Caco-2 (cell line): ENCODE measurements at regions of chr1 and their contacts with region 1.

Region 1: GRCh38 chr1:24111996-24112779 is at the start of gene MYOM3:
- DNase-seq: peak; percentile 69 to 74
- H3K4me3 ChIP-seq: no peak within 1 kb of the TSS
- H3K4me3 Mint-ChIP-seq: no peak within 1 kb of the TSS
- H3K27ac Mint-ChIP-seq: no peak within 1 kb of the TSS
- H3K4me1 ChIP-seq: 0 out of 2 replicates have a peak, but pooled peaks cover 5% of the 10 kb centered on the region
- H3K4me1 Mint-ChIP-seq: no peaks in the 10 kb centered on the region
- H3K27me3 ChIP-seq: no peaks in the 10 kb centered on the region
- H3K27me3 Mint-ChIP-seq: no peaks in the 10 kb centered on the region
- CTCF ChIP-seq: peak in 1 of 2 experiments; percentile 78
- total RNA-seq, gene MYOM3: not detected in 2 replicates

Region 2: DNA sequence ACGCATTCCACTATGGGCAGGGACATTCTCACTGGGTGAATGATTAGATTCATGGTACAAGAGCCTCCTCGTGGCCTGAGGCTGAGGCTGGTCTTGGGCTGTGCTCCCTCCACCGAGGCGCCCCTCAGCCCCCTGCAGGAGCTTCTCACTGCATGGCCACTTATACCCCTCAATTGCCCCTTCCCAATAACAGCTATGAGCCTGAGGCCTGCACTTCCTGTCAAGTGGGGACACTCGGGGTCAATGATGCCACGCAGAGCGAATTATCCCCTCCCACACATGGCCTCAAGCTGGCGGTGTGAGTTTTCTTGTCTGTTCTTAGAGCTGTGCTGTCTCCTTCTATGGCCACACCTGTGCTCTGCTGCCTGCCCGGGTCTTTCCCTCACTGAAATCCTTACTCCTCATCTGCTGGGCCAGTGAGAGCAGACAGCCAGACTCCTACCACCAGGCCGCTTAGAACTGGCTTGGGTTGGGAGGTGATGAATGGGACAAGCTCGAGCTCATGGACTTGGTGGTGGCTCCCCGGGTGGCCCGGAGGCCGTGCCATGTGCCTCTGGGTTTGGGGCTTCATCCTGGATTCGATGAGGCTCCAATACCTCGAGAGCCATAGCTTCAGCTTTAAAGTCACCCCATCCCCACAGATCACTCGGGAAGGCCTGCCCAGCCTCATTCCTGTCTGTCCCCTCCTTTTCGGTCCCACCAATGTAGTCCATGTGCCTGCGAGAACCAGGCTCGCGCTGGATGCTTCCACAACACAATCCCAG is 51.9 kb before region 1 on chr1:
- CTCF ChIA-PET with region 1: no interaction called
- POLR2A ChIA-PET with region 1: no interaction called
- intact Hi-C with region 1: no loop called
- DNase-seq: no peak
- H3K4me3 ChIP-seq: no peak overlapping the region
- H3K4me3 Mint-ChIP-seq: no peak overlapping the region
- H3K27ac Mint-ChIP-seq: no peak overlapping the region
- H3K4me1 ChIP-seq: no peaks in the 10 kb centered on the region
- H3K4me1 Mint-ChIP-seq: no peaks in the 10 kb centered on the region
- H3K27me3 ChIP-seq: no peaks in the 10 kb centered on the region
- H3K27me3 Mint-ChIP-seq: no peaks in the 10 kb centered on the region
- CTCF ChIP-seq: no peak

Region 3: GRCh38 chr1:24070821-24071393 is 41.3 kb before region 1 on chr1:
- CTCF ChIA-PET with region 1: interaction called, 10 read pairs
- POLR2A ChIA-PET with region 1: no interaction called
- intact Hi-C with region 1: loop called (anchors 1 kb)
- DNase-seq: peak; percentile 79 to 85
- H3K4me3 ChIP-seq: no peak overlapping the region
- H3K4me3 Mint-ChIP-seq: no peak overlapping the region
- H3K27ac Mint-ChIP-seq: no peak overlapping the region
- H3K4me1 ChIP-seq: no peaks in the 10 kb centered on the region
- H3K4me1 Mint-ChIP-seq: no peaks in the 10 kb centered on the region
- H3K27me3 ChIP-seq: no peaks in the 10 kb centered on the region
- H3K27me3 Mint-ChIP-seq: no peaks in the 10 kb centered on the region
- CTCF ChIP-seq: peak; percentile 77 to 81

Region 4: DNA sequence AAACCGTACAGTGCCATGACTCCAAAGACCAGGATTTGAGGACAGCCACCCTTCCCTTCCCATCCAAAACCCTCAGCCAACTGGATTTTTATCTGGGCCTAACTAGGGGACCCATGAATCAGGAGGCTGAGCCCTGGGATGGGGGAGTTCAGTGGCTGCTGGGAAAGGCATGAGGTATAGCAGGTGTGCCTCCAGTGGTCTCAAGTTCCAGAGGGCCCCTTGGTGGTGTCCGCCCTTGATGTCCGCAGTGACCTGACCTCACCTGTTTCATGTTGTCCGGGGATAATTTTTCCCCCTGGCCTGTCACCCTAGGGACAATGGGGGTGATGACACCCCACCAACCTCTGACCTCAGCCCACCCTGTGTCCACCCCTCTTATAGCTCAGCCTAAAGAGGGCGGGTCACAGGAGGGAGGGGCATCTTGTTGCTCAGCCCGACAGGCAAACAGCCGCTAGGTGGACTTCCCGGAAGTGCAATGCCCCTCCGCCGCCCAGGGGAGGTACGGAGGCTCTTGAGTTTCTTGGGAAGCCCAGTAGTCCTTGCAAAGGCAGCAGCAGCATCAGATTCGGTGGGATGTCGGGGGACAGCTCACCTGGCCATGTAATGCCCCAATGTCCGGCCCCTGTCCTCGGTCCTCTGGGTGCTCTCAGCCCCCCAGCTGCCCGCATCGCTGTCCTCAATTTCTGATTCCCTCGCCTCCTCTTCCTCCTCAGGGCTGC is 44.5 kb after region 1 on chr1:
- CTCF ChIA-PET with region 1: no interaction called
- POLR2A ChIA-PET with region 1: no interaction called
- intact Hi-C with region 1: no loop called
- DNase-seq: no peak
- H3K4me3 ChIP-seq: no peak overlapping the region
- H3K4me3 Mint-ChIP-seq: no peak overlapping the region
- H3K27ac Mint-ChIP-seq: no peak overlapping the region
- H3K4me1 ChIP-seq: peaks cover 3% of the 10 kb centered on the region
- H3K4me1 Mint-ChIP-seq: peaks cover under 1% of the 10 kb centered on the region
- H3K27me3 ChIP-seq: no peaks in the 10 kb centered on the region
- H3K27me3 Mint-ChIP-seq: no peaks in the 10 kb centered on the region
- CTCF ChIP-seq: no peak

Region 5: DNA sequence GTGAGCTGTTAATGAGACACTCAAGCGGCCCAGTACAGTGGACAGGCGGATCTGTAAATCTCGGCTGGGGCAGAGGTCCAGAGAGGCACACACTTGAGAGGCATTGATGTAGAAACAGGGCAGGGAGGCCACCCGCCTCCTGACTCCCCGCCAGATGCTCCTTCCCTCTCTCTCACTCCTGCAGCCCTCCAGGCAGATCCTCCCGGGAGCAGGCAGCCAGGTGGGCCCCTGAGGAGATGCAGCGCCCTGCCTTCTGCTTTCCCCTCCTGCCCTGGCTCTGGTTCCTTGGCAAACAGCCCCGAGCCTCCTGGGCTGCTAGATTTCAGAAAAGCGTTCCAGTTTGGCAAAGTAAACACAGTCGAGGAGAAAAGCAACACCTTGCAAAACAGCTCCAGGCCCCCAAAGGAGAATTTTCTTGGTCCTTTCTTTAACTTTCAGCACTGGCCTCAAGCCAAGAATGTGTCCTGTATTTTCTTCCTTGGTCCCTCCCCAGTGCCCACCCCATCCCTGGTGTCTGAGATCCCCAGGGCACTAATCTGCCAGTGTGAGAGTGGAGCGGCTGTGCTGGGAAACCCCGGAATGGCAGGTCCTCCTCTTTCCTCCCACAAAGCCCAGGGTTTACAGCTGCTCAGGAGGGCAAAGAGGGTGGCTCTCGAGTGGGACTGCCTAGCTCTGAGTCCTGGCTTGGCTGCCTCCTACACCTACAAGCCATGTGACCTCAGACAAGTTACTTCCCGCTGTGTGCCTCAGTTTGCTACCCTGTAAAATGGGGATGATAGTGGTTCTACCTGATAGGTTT is 104.3 kb after region 1 on chr1:
- CTCF ChIA-PET with region 1: no interaction called
- POLR2A ChIA-PET with region 1: no interaction called
- intact Hi-C with region 1: no loop called
- DNase-seq: no peak
- H3K4me3 ChIP-seq: no peak overlapping the region
- H3K4me3 Mint-ChIP-seq: no peak overlapping the region
- H3K27ac Mint-ChIP-seq: no peak overlapping the region
- H3K4me1 ChIP-seq: no peaks in the 10 kb centered on the region
- H3K4me1 Mint-ChIP-seq: no peaks in the 10 kb centered on the region
- H3K27me3 ChIP-seq: no peaks in the 10 kb centered on the region; the same call in 1 of the 2 replicates
- H3K27me3 Mint-ChIP-seq: no peaks in the 10 kb centered on the region
- CTCF ChIP-seq: no peak